ENCODE measurements at regions of chr19 and their contacts with region 1.

Region 1: GRCh38 chr19:33176670-33177416 is 17.3 kb upstream of the LRP3 start:
- DNase-seq: peak; percentile 95
- H3K4me3 ChIP-seq: peak overlapping the region; percentile 85
- H3K27ac ChIP-seq: peak overlapping the region; percentile 51
- H3K4me1 ChIP-seq: peaks cover 17% of the 10 kb centered on the region
- CTCF ChIP-seq: no peak; the same call in 1 of the 2 replicates

Region 2: GRCh38 chr19:32339988-32340874 is 836.6 kb before region 1 on chr19:
- CTCF ChIA-PET with region 1: no interaction called
- POLR2A ChIA-PET with region 1: no interaction called
- intact Hi-C with region 1: loop called (anchors 5 kb)
- DNase-seq: peak; percentile 44
- H3K4me3 ChIP-seq: no peak overlapping the region
- H3K27ac ChIP-seq: no peak overlapping the region
- H3K4me1 ChIP-seq: no peaks in the 10 kb centered on the region
- CTCF ChIP-seq: peak; percentile 78

Region 3: DNA sequence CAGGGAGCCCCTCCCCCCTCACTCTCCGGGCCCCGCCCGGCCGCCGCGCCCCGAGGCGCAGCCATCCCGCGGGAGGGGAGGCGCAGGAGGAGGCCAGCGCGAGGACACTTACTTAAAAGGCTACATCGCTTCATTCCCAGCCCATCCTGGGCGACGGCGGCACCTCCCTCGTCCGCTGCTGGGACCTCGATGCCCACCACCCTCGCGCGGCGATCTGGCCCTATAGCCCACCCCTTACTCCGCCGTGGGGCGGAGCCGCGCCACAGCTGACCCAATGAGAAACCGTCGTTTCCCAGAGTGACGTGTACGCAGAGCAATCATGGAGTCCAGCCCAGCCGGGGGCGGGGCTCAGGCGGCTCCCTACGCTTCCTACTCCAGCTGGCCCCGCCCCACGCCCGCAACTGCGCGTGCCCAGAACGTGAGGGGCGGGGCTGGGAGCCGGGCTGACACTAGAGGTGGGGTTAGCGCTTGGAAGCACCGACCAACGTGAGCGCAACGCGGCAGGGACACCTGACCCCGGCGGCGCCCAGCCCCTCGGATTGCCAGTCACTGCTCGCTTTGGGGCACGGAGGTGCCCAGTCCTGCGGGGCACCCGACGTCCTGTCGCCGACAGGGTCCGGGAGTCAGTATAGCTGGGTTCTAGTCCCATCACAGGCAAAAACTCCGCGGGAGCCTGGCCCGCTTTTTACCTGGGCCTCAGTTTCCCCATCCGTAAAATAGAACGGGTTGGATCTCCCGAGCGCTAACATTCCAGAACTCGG is 501.7 kb before region 1 on chr19 and contains the start of gene ANKRD27:
- CTCF ChIA-PET with region 1: no interaction called
- POLR2A ChIA-PET with region 1: no interaction called
- intact Hi-C with region 1: loop called (anchors 10 kb)
- DNase-seq: peak; percentile 99
- H3K4me3 ChIP-seq: peak within 1 kb of the TSS; percentile 99
- H3K27ac ChIP-seq: peak within 1 kb of the TSS; percentile 36
- H3K4me1 ChIP-seq: peaks cover 21% of the 10 kb centered on the region
- CTCF ChIP-seq: no peak
- total RNA-seq, gene ANKRD27: 39.3 and 43.0 TPM in 2 replicates

Region 4: GRCh38 chr19:33125929-33126388 is 50.9 kb before region 1 on chr19:
- CTCF ChIA-PET with region 1: interaction called, 3 read pairs
- POLR2A ChIA-PET with region 1: no interaction called
- intact Hi-C with region 1: loop called (anchors 2 kb)
- DNase-seq: peak; percentile 59
- H3K4me3 ChIP-seq: no peak overlapping the region
- H3K27ac ChIP-seq: no peak overlapping the region
- H3K4me1 ChIP-seq: no peaks in the 10 kb centered on the region
- CTCF ChIP-seq: peak; percentile 90

Region 5: DNA sequence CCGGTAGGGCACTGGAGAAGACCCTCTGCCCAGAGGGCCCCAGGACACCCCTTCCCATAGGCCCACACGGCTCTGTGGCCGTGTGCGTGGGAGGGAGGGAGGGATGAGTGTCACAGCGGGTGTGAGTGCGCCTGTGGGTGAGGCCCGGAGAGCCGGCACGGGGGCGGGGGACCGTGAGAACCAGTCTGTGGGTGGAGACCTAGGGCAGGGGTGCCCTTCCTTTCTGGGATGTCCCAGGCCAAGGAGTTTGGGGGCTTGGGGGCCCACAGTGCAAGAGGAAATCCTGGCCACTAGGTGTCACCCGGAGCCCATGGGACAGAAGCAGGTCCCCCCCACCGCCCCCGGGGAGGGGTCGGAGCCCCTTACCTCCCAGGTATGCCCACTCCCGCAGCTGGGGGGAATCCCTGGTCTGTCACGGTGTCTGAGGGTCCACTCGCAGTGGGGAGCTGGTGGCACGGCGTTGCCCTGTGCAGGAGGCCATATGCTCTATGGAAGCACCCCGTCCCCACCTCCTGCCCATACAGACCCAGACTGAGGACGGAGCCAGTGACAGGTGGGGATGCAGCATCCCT is 64.8 kb after region 1 on chr19:
- CTCF ChIA-PET with region 1: no interaction called
- POLR2A ChIA-PET with region 1: no interaction called
- intact Hi-C with region 1: no loop called
- DNase-seq: peak; percentile 29
- H3K4me3 ChIP-seq: no peak overlapping the region
- H3K27ac ChIP-seq: no peak overlapping the region
- H3K4me1 ChIP-seq: no peaks in the 10 kb centered on the region
- CTCF ChIP-seq: peak; percentile 76

Region 6: GRCh38 chr19:33373701-33374421 is 197.0 kb after region 1 on chr19 and contains the start of gene CEBPG:
- CTCF ChIA-PET with region 1: no interaction called
- POLR2A ChIA-PET with region 1: interaction called, 4 read pairs
- intact Hi-C with region 1: loop called (anchors 1 kb)
- DNase-seq: peak; percentile 75
- H3K4me3 ChIP-seq: peak within 1 kb of the TSS; percentile 80
- H3K27ac ChIP-seq: peak within 1 kb of the TSS; percentile 86
- H3K4me1 ChIP-seq: peaks cover 38% of the 10 kb centered on the region
- CTCF ChIP-seq: peak; percentile 37; the same call in 1 of the 2 replicates
- total RNA-seq, gene CEBPG: 44.9 and 46.1 TPM in 2 replicates